ENCODE measurements at regions of chr11 and their contacts with region 1.

Region 1: DNA sequence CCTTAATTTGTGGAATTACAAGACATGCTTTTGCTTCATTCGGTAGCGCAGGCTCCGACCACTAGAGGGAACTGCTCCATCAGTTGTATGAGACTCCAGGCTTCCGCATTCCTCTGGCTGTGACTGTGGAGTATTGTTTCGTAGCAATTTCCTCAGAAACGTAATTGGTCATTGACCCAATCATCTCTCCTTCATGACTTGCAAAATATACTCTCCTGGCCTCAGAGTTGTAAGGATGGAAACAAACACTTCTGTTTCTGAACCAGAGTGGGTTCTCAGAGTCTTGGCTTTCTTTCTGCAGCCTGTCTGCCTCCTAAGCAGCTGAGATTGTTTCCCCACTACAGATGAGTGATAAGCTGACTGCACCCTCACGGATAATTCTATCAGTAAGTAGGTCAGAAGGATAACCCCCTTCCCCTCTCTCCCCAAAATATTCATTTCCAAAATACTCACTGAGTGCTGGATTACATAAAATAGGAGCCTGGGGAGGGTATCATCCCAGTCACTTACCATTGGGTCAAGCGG is 146.8 kb upstream of the ZC3H12C start:
- DNase-seq: peak; percentile 47
- H3K4me3 Mint-ChIP-seq: peak overlapping the region; percentile 4
- H3K27ac Mint-ChIP-seq: peak overlapping the region; percentile 50
- H3K4me1 Mint-ChIP-seq: peaks cover 15% of the 10 kb centered on the region
- H3K27me3 Mint-ChIP-seq: peaks cover 12% of the 10 kb centered on the region

Region 2: DNA sequence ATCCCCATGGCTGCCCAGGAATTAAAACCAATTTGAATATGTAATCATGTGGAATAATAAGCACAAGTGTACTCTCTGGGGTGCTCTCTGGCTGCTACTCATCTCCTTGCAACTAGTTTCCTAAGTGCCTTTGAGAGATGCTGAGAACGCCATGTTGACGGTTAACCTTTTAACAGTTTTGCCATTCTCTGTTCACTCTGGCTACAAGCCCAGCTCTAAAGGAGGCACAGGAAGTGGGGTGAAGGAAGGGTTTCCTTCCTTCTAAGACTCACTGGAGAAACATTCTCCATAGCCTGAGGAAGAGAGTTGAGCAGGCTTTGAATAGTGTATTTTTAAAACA is 24.8 kb after region 1 on chr11:
- intact Hi-C with region 1: loop called (anchors 1 kb)
- DNase-seq: no peak
- H3K4me3 Mint-ChIP-seq: peak overlapping the region; percentile 57
- H3K27ac Mint-ChIP-seq: peak overlapping the region; percentile 82
- H3K4me1 Mint-ChIP-seq: peaks cover 45% of the 10 kb centered on the region
- H3K27me3 Mint-ChIP-seq: peaks cover 7% of the 10 kb centered on the region

Region 3: GRCh38 chr11:110077831-110078325 is 131.5 kb after region 1 on chr11:
- intact Hi-C with region 1: loop called (anchors 1 kb)
- DNase-seq: peak; percentile 47
- H3K4me3 Mint-ChIP-seq: peak overlapping the region; percentile 28
- H3K27ac Mint-ChIP-seq: peak overlapping the region; percentile 75
- H3K4me1 Mint-ChIP-seq: peaks cover 38% of the 10 kb centered on the region
- H3K27me3 Mint-ChIP-seq: peaks cover 8% of the 10 kb centered on the region

Region 4: GRCh38 chr11:110098645-110099044 is 152.3 kb after region 1 on chr11:
- intact Hi-C with region 1: loop called (anchors 1 kb)
- DNase-seq: no peak
- H3K4me3 Mint-ChIP-seq: no peak overlapping the region
- H3K27ac Mint-ChIP-seq: no peak overlapping the region
- H3K4me1 Mint-ChIP-seq: peaks cover 9% of the 10 kb centered on the region
- H3K27me3 Mint-ChIP-seq: peaks cover 37% of the 10 kb centered on the region

Region 5: GRCh38 chr11:110195845-110196754 is 249.7 kb after region 1 on chr11:
- intact Hi-C with region 1: loop called (anchors 2 kb)
- DNase-seq: no peak
- H3K4me3 Mint-ChIP-seq: no peak overlapping the region
- H3K27ac Mint-ChIP-seq: no peak overlapping the region
- H3K4me1 Mint-ChIP-seq: peaks cover 15% of the 10 kb centered on the region
- H3K27me3 Mint-ChIP-seq: peaks cover 34% of the 10 kb centered on the region

Region 6: GRCh38 chr11:110376711-110377324 is 430.4 kb after region 1 on chr11:
- intact Hi-C with region 1: loop called (anchors 1 kb)
- DNase-seq: no peak
- H3K4me3 Mint-ChIP-seq: no peak overlapping the region
- H3K27ac Mint-ChIP-seq: no peak overlapping the region
- H3K4me1 Mint-ChIP-seq: peaks cover 40% of the 10 kb centered on the region
- H3K27me3 Mint-ChIP-seq: no peaks in the 10 kb centered on the region

Region 7: DNA sequence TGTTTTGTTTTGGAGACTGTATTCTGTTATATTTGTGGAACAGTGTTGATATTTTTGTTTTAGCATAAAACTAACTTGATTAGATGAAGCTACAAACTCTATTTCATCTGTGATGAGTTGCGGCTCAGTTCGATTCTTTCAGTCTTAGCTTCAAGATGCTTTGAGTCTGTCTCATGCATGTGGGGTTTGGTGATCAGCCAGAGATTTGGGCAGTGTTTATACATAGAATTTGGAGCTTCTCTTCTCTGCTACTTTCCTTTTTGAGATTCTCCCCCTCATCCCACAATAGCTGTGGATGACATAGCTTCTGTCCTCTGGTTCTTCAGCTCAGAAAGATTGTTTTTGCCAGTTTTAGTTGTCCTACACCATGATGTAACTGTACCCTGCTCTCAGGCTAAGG is 675.4 kb after region 1 on chr11:
- intact Hi-C with region 1: no loop called
- DNase-seq: no peak
- H3K4me3 Mint-ChIP-seq: no peak overlapping the region
- H3K27ac Mint-ChIP-seq: no peak overlapping the region
- H3K4me1 Mint-ChIP-seq: no peaks in the 10 kb centered on the region
- H3K27me3 Mint-ChIP-seq: no peaks in the 10 kb centered on the region